CD8-positive, alpha-beta T cell (primary cell): ENCODE measurements at regions of chr7 and their contacts with region 1.

Region 1: DNA sequence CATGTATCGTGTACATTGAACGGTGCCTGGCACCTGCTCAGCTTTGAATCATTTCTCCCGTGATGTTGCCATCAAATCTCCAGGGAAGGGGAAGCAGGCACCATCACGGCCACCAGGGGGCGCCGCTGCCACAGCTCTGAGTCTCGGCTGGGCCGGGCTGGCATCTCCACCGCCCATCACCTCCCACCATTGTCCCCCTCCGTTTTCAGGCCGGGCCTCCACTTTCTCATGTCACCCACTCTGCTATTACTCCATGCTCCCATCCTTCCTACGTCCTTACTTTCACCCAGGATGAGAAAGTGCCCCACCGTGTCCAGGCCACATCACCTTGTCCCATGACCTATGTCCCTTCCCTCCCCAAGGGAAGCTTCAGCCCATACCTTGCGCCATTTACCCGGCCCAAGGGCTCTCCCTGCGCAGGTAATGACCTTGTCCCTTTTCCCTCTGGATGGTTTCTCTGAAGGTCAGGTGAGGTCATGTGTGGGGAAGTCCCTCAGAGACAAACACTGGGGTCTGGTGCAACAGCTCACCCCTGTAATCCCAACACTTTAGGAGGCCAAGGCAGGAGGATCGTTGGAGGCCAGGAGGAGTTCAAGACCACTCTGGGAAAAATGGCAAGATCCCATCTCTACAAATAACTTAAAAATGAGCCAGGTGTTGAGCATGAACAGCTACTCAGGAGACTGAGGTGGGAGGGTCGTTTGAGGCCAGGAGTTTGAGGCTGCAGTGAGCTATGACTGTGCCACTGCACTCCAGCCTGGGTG is 31.8 kb upstream of the OCM2 start:
- DNase-seq: peak; percentile 63 to 88 (median 75)
- ATAC-seq: peak; percentile 75
- H3K4me3 ChIP-seq: no peak overlapping the region
- H3K4me3 Mint-ChIP-seq: no peak overlapping the region
- H3K27ac ChIP-seq: no peak overlapping the region
- H3K27ac Mint-ChIP-seq: no peak overlapping the region
- H3K4me1 ChIP-seq: no peaks in the 10 kb centered on the region
- H3K4me1 Mint-ChIP-seq: peaks cover 3% of the 10 kb centered on the region
- H3K27me3 ChIP-seq: no peaks in the 10 kb centered on the region
- H3K27me3 Mint-ChIP-seq: peaks cover 15% of the 10 kb centered on the region
- CTCF ChIP-seq: peak; percentile 87

Region 2: DNA sequence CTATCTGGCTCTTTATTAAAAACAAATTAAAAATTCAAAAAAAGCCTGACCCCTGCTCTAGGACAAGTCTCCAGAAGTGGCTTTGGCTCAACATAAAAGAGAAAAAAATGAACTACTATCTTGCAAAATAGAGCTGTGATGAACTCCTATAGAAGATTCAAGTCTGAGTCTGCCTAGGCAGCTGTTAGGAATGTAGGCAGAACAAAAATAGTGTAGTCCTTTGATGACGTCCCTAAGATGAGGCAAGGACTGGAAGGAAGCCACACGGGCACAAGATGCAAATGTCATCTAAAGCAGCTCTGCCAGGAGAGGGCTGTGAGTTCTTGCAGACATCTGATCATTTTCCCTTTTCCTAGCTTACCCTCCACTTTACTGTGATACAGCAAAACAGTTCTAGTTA is 170.1 kb before region 1 on chr7:
- CTCF ChIA-PET with region 1: no interaction called
- POLR2A ChIA-PET with region 1: no interaction called
- intact Hi-C with region 1: no loop called
- DNase-seq: no peak
- ATAC-seq: no peak
- H3K4me3 ChIP-seq: no peak overlapping the region
- H3K4me3 Mint-ChIP-seq: no peak overlapping the region
- H3K27ac ChIP-seq: no peak overlapping the region
- H3K27ac Mint-ChIP-seq: no peak overlapping the region
- H3K4me1 ChIP-seq: no peaks in the 10 kb centered on the region
- H3K4me1 Mint-ChIP-seq: no peaks in the 10 kb centered on the region
- H3K27me3 ChIP-seq: no peaks in the 10 kb centered on the region
- H3K27me3 Mint-ChIP-seq: no peaks in the 10 kb centered on the region
- CTCF ChIP-seq: no peak

Region 3: GRCh38 chr7:98034081-98035035 is 12.6 kb after region 1 on chr7:
- CTCF ChIA-PET with region 1: interaction called, 20 read pairs
- POLR2A ChIA-PET with region 1: no interaction called
- intact Hi-C with region 1: no loop called
- DNase-seq: no peak
- ATAC-seq: no peak
- H3K4me3 ChIP-seq: no peak overlapping the region
- H3K4me3 Mint-ChIP-seq: no peak overlapping the region
- H3K27ac ChIP-seq: no peak overlapping the region
- H3K27ac Mint-ChIP-seq: no peak overlapping the region
- H3K4me1 ChIP-seq: no peaks in the 10 kb centered on the region
- H3K4me1 Mint-ChIP-seq: no peaks in the 10 kb centered on the region
- H3K27me3 ChIP-seq: no peaks in the 10 kb centered on the region
- H3K27me3 Mint-ChIP-seq: peaks cover 5% of the 10 kb centered on the region
- CTCF ChIP-seq: no peak

Region 4: GRCh38 chr7:98168181-98168905 is 146.6 kb after region 1 on chr7:
- CTCF ChIA-PET with region 1: interaction called, 187 read pairs
- POLR2A ChIA-PET with region 1: no interaction called
- intact Hi-C with region 1: loop called (anchors 1 kb)
- DNase-seq: peak; percentile 14 to 85 (median 66)
- ATAC-seq: peak; percentile 65
- H3K4me3 ChIP-seq: no peak overlapping the region
- H3K4me3 Mint-ChIP-seq: no peak overlapping the region
- H3K27ac ChIP-seq: no peak overlapping the region
- H3K27ac Mint-ChIP-seq: no peak overlapping the region
- H3K4me1 ChIP-seq: no peaks in the 10 kb centered on the region
- H3K4me1 Mint-ChIP-seq: peaks cover 20% of the 10 kb centered on the region
- H3K27me3 ChIP-seq: no peaks in the 10 kb centered on the region
- H3K27me3 Mint-ChIP-seq: no peaks in the 10 kb centered on the region
- CTCF ChIP-seq: peak; percentile 61

Region 5: GRCh38 chr7:98240961-98241674 is 219.3 kb after region 1 on chr7:
- CTCF ChIA-PET with region 1: no interaction called
- POLR2A ChIA-PET with region 1: no interaction called
- intact Hi-C with region 1: loop called in 1 of 2 experiments (anchors 10 kb)
- DNase-seq: peak in 4 of 9 experiments; percentile 17 to 46 (median 37)
- ATAC-seq: peak; percentile 68
- H3K4me3 ChIP-seq: no peak overlapping the region
- H3K4me3 Mint-ChIP-seq: no peak overlapping the region
- H3K27ac ChIP-seq: no peak overlapping the region
- H3K27ac Mint-ChIP-seq: no peak overlapping the region
- H3K4me1 ChIP-seq: peaks cover 4% of the 10 kb centered on the region
- H3K4me1 Mint-ChIP-seq: no peaks in the 10 kb centered on the region
- H3K27me3 ChIP-seq: no peaks in the 10 kb centered on the region
- H3K27me3 Mint-ChIP-seq: no peaks in the 10 kb centered on the region
- CTCF ChIP-seq: no peak

Region 6: GRCh38 chr7:98400542-98401340 is 379.0 kb after region 1 on chr7 and contains the start of gene BAIAP2L1:
- CTCF ChIA-PET with region 1: interaction called, 4 read pairs
- POLR2A ChIA-PET with region 1: no interaction called
- intact Hi-C with region 1: loop called (anchors 1 to 5 kb)
- DNase-seq: peak; percentile 65 to 88 (median 77)
- ATAC-seq: peak; percentile 89
- H3K4me3 ChIP-seq: peak within 1 kb of the TSS in 1 of 2 experiments; percentile 47
- H3K4me3 Mint-ChIP-seq: peak within 1 kb of the TSS; percentile 66
- H3K27ac ChIP-seq: no peak within 1 kb of the TSS
- H3K27ac Mint-ChIP-seq: no peak within 1 kb of the TSS
- H3K4me1 ChIP-seq: peaks cover 8% of the 10 kb centered on the region
- H3K4me1 Mint-ChIP-seq: peaks cover 9% of the 10 kb centered on the region
- H3K27me3 ChIP-seq: peaks cover 0 to 8% of the 10 kb centered on the region in 2 experiments
- H3K27me3 Mint-ChIP-seq: peaks cover 24% of the 10 kb centered on the region
- CTCF ChIP-seq: peak; percentile 38
- total RNA-seq, gene BAIAP2L1: 0.43 TPM in 1 of 2 experiments, not detected in the other

Region 7: GRCh38 chr7:98745722-98746318 is 724.0 kb after region 1 on chr7:
- CTCF ChIA-PET with region 1: interaction called, 4 read pairs
- POLR2A ChIA-PET with region 1: no interaction called
- intact Hi-C with region 1: loop called (anchors 2 to 5 kb)
- DNase-seq: peak; percentile 40 to 80 (median 67)
- ATAC-seq: no peak
- H3K4me3 ChIP-seq: no peak overlapping the region
- H3K4me3 Mint-ChIP-seq: no peak overlapping the region
- H3K27ac ChIP-seq: no peak overlapping the region
- H3K27ac Mint-ChIP-seq: no peak overlapping the region
- H3K4me1 ChIP-seq: no peaks in the 10 kb centered on the region
- H3K4me1 Mint-ChIP-seq: no peaks in the 10 kb centered on the region
- H3K27me3 ChIP-seq: no peaks in the 10 kb centered on the region
- H3K27me3 Mint-ChIP-seq: peaks cover 11% of the 10 kb centered on the region
- CTCF ChIP-seq: peak; percentile 70

Region 8: GRCh38 chr7:98841179-98841997 is 819.6 kb after region 1 on chr7:
- CTCF ChIA-PET with region 1: interaction called, 9 read pairs
- POLR2A ChIA-PET with region 1: no interaction called
- intact Hi-C with region 1: loop called (anchors 1 to 5 kb)
- DNase-seq: peak; percentile 56 to 83 (median 69)
- ATAC-seq: peak; percentile 71
- H3K4me3 ChIP-seq: no peak overlapping the region
- H3K4me3 Mint-ChIP-seq: no peak overlapping the region
- H3K27ac ChIP-seq: no peak overlapping the region
- H3K27ac Mint-ChIP-seq: no peak overlapping the region
- H3K4me1 ChIP-seq: no peaks in the 10 kb centered on the region
- H3K4me1 Mint-ChIP-seq: peaks cover 2% of the 10 kb centered on the region
- H3K27me3 ChIP-seq: no peaks in the 10 kb centered on the region
- H3K27me3 Mint-ChIP-seq: peaks cover 13% of the 10 kb centered on the region
- CTCF ChIP-seq: peak; percentile 85

Region 9: GRCh38 chr7:99005776-99006175 is 984.0 kb after region 1 on chr7:
- CTCF ChIA-PET with region 1: no interaction called
- POLR2A ChIA-PET with region 1: no interaction called
- intact Hi-C with region 1: no loop called
- DNase-seq: peak in 1 of 9 experiments; percentile 42
- ATAC-seq: no peak
- H3K4me3 ChIP-seq: no peak overlapping the region
- H3K4me3 Mint-ChIP-seq: no peak overlapping the region
- H3K27ac ChIP-seq: no peak overlapping the region
- H3K27ac Mint-ChIP-seq: no peak overlapping the region
- H3K4me1 ChIP-seq: peaks cover 9% of the 10 kb centered on the region
- H3K4me1 Mint-ChIP-seq: peaks cover 9% of the 10 kb centered on the region
- H3K27me3 ChIP-seq: no peaks in the 10 kb centered on the region
- H3K27me3 Mint-ChIP-seq: no peaks in the 10 kb centered on the region
- CTCF ChIP-seq: no peak